ENCODE measurements at regions of chr1 and their contacts with region 1.

Region 1: GRCh38 chr1:206912445-206913095 is 9.2 kb downstream of the FCMR start:
- DNase-seq: peak; percentile 81 to 89 (median 84)
- ATAC-seq: peak; percentile 81
- H3K4me3 ChIP-seq: no peak overlapping the region
- H3K27ac ChIP-seq: no peak overlapping the region
- H3K4me1 ChIP-seq: peaks cover 4 to 12% of the 10 kb centered on the region in 2 experiments; a peak in 3 of 5 replicates
- H3K27me3 ChIP-seq: peaks cover 45 to 63% of the 10 kb centered on the region in 2 experiments
- CTCF ChIP-seq: peak; percentile 90 to 92 (median 92)
- EP300 ChIP-seq: no peak
- POLR2A ChIP-seq: no peak
- RAD21 ChIP-seq: peak; percentile 87 to 94

Region 2: DNA sequence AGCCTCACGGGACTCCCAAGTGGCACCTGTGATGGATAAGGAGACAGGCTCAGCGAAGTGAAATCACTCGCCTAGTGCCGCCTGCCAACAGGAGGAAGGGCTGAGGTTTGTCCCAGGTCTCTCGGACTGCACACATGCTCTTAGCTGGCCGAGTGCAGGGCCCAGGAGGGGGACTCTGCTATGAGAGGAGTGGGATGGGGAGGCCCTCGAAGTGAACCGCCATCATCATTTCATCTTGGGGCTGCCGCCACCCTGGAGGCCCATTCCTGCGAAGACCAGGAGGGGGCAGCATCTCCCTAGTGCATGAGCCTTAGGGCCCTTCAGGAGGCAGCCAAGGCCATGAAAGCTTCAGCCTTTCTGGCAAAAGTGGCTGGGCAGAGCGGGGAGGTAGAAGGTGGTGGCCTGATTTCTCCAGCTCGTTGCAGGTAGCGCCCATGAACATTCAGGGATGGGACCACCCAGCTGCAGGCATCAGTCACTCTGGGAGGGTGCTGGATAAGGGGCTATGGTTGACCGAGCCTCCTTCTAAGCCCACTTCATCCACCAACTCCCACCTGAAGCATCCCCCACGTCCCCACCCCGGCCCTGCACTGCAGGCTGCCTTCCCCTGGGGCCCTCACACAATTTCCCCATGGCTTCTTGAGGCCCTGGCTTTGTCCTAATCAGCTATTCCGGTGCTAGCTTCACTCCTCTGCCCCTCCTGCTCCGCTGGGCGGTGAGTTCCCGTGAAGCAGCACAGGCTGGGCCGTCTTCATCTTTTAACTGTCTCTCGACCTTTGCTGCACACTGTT is 422.4 kb before region 1 on chr1:
- CTCF ChIA-PET with region 1: interaction called, 4 read pairs
- POLR2A ChIA-PET with region 1: no interaction called
- in situ Hi-C with region 1: loop called (anchors 5 kb)
- intact Hi-C with region 1: loop called (anchors 5 kb)
- DNase-seq: peak; percentile 90 to 94 (median 92)
- ATAC-seq: peak; percentile 96
- H3K4me3 ChIP-seq: no peak overlapping the region
- H3K27ac ChIP-seq: no peak overlapping the region
- H3K4me1 ChIP-seq: peaks cover 19 to 31% of the 10 kb centered on the region in 2 experiments
- H3K27me3 ChIP-seq: no peaks in the 10 kb centered on the region
- CTCF ChIP-seq: peak; percentile 99
- EP300 ChIP-seq: no peak
- POLR2A ChIP-seq: no peak
- RAD21 ChIP-seq: peak; percentile 98 to 99

Region 3: GRCh38 chr1:206635080-206635977 is 277.2 kb before region 1 on chr1 and contains the start of gene DYRK3:
- CTCF ChIA-PET with region 1: interaction called, 30 read pairs
- POLR2A ChIA-PET with region 1: interaction called, 3 read pairs
- in situ Hi-C with region 1: no loop called
- intact Hi-C with region 1: loop called (anchors 1 kb)
- DNase-seq: peak; percentile 98 to 99 (median 99)
- ATAC-seq: peak; percentile 93
- H3K4me3 ChIP-seq: peak within 1 kb of the TSS; percentile 87
- H3K27ac ChIP-seq: peak within 1 kb of the TSS; percentile 77
- H3K4me1 ChIP-seq: peaks cover 14 to 24% of the 10 kb centered on the region in 2 experiments
- H3K27me3 ChIP-seq: no peaks in the 10 kb centered on the region
- CTCF ChIP-seq: peak in 2 of 3 experiments; percentile 30; a peak in 2 of 6 replicates
- EP300 ChIP-seq: no peak; the same call in 1 of the 2 replicates
- POLR2A ChIP-seq: peak; percentile 90
- RAD21 ChIP-seq: no peak; a peak in 1 of 4 replicates
- polyA plus RNA-seq, gene DYRK3: 4.5 to 5.2 TPM

Region 4: GRCh38 chr1:206734499-206735142 is 177.9 kb before region 1 on chr1:
- CTCF ChIA-PET with region 1: interaction called, 27 read pairs
- POLR2A ChIA-PET with region 1: interaction called, 4 read pairs
- in situ Hi-C with region 1: loop called (anchors 5 kb)
- intact Hi-C with region 1: loop called (anchors 2 kb)
- DNase-seq: peak; percentile 72 to 79 (median 76)
- ATAC-seq: peak; percentile 84
- H3K4me3 ChIP-seq: no peak overlapping the region
- H3K27ac ChIP-seq: no peak overlapping the region
- H3K4me1 ChIP-seq: peaks cover 10 to 17% of the 10 kb centered on the region in 2 experiments
- H3K27me3 ChIP-seq: no peaks in the 10 kb centered on the region; a peak in 1 of 5 replicates
- CTCF ChIP-seq: peak; percentile 89 to 96 (median 89)
- EP300 ChIP-seq: no peak
- POLR2A ChIP-seq: no peak
- RAD21 ChIP-seq: peak; percentile 88 to 89

Region 5: GRCh38 chr1:206865013-206865671 is 47.4 kb before region 1 on chr1 and contains the start of gene IL20:
- CTCF ChIA-PET with region 1: interaction called, 9 read pairs
- POLR2A ChIA-PET with region 1: interaction called, 5 read pairs
- in situ Hi-C with region 1: no loop called
- intact Hi-C with region 1: loop called (anchors 2 kb)
- DNase-seq: peak; percentile 82 to 91 (median 88)
- ATAC-seq: peak; percentile 99
- H3K4me3 ChIP-seq: no peak within 1 kb of the TSS
- H3K27ac ChIP-seq: no peak within 1 kb of the TSS
- H3K4me1 ChIP-seq: peaks cover 0 to 5% of the 10 kb centered on the region in 2 experiments; a peak in 2 of 5 replicates
- H3K27me3 ChIP-seq: peaks cover 8 to 16% of the 10 kb centered on the region in 2 experiments; a peak in 4 of 5 replicates
- CTCF ChIP-seq: peak; percentile 93 to 99 (median 97)
- EP300 ChIP-seq: no peak
- POLR2A ChIP-seq: no peak
- RAD21 ChIP-seq: peak; percentile 71 to 76
- polyA plus RNA-seq, gene IL20: not detected

Region 6: DNA sequence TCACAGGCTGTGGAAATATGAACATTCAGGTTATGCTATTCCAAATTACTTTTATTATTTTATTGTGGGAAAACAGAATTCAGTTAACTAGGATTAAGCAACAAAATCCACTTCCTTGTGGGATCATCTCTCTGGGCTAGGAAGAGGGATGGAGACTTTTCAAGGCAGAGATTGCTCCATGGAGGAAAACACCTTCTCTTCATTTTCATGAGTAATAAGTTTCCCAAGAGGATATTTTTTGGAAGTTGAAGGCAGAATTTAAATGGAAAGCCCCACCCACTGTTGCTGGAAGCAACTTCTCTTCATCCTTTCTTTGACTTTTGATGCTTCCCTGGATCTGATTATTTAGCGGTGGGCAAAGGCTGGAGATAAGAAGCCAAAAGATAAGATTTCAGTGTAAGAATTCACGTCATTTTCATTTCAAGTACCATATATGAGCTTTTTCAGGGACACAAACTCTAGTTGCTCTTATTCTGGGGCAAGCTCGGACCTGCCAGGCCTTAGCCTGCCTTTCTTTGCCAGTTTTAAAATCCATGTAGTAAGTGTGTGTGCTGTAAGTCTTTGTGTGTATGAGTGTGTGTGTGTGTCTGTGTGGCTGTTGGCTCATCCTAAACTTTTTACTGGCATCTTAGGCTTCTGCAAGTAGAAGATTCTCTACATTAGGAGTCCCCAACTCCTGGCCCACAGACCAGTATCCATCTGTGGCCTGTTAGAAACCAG is 27.1 kb before region 1 on chr1:
- CTCF ChIA-PET with region 1: no interaction called
- POLR2A ChIA-PET with region 1: no interaction called
- in situ Hi-C with region 1: no loop called
- intact Hi-C with region 1: no loop called
- DNase-seq: no peak
- ATAC-seq: no peak
- H3K4me3 ChIP-seq: no peak overlapping the region
- H3K27ac ChIP-seq: no peak overlapping the region
- H3K4me1 ChIP-seq: peaks cover 0 to 6% of the 10 kb centered on the region in 2 experiments; a peak in 4 of 5 replicates
- H3K27me3 ChIP-seq: peaks cover 18 to 21% of the 10 kb centered on the region in 2 experiments; a peak in 4 of 5 replicates
- CTCF ChIP-seq: no peak
- EP300 ChIP-seq: no peak
- POLR2A ChIP-seq: no peak
- RAD21 ChIP-seq: no peak

Region 7: DNA sequence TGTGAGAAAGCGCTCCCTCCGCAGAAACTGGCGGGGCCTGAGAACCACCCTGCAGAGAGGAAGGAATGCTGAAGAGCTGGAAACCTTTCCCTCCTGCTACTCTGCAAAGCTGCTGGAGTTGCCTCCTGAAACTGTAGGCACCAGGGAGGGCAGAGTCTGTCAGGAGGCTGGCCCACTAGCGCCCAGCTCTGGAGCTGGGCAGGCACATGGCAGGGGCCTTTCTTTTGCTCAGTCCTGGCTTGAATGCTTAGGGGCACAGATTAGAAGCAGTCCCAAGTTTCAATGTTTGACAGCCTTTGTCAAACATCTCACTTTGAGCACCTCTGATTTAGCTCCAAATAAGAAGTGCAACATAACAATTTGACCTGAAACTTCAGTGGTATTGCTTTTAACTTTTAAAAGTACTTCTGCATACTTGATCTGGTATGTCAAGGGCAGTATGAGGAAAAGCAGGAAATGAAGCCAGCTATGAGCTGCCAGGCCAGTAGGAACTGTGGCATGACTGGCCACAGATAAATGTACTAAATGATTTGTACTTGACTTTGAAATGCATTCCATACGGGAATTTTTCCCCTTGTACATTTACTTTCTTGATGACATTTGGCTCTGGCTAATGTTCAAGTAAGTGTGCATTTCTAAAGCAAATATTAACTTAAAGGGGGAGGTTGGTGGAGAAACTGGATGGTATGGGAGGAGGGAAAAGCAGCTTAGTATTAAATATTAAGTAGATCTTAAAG is 112.7 kb after region 1 on chr1:
- CTCF ChIA-PET with region 1: no interaction called
- POLR2A ChIA-PET with region 1: no interaction called
- in situ Hi-C with region 1: no loop called
- intact Hi-C with region 1: no loop called
- DNase-seq: no peak
- ATAC-seq: peak; percentile 6
- H3K4me3 ChIP-seq: peak overlapping the region; percentile 15
- H3K27ac ChIP-seq: peak overlapping the region; percentile 100
- H3K4me1 ChIP-seq: peaks cover 49 to 85% of the 10 kb centered on the region in 2 experiments
- H3K27me3 ChIP-seq: no peaks in the 10 kb centered on the region
- CTCF ChIP-seq: 0 out of 6 replicates have a peak, but pooled peaks of 1 of the 3 experiments have one; percentile 4
- EP300 ChIP-seq: peak; percentile 2; the same call in 1 of the 2 replicates
- POLR2A ChIP-seq: no peak
- RAD21 ChIP-seq: no peak; a peak in 2 of 4 replicates